MCF 10A (cell line): ENCODE measurements at regions of chr5 and their contacts with region 1.

Region 1: GRCh38 chr5:134063188-134063820 is 51.2 kb upstream of the TCF7 start:
- DNase-seq: peak; percentile 18
- H3K4me3 Mint-ChIP-seq: no peak overlapping the region
- H3K27ac Mint-ChIP-seq: no peak overlapping the region
- H3K4me1 Mint-ChIP-seq: peaks cover 13% of the 10 kb centered on the region
- H3K27me3 Mint-ChIP-seq: no peaks in the 10 kb centered on the region
- CTCF ChIP-seq: no peak

Region 2: DNA sequence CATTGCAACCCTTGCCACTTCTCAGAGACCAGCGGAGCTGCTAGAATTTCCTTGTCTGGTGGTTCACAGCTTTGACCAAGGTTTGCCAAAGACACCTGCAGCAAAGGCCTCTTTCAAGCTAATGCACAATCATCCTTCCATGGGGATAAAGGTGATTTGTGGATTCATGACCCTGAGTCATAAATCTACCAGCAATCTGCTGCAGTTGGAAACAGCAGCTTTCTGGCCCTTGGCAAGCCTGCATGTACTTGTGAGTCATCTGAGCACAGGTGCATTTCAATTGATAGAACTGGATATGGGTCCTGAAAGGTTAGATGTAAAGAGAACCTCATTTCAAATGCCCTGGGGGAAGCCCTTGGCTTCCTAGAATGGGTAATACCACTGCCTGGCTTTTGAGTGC is 29.6 kb after region 1 on chr5:
- CTCF ChIA-PET with region 1: interaction called, 4 read pairs
- POLR2A ChIA-PET with region 1: interaction called, 3 read pairs
- intact Hi-C with region 1: loop called (anchors 5 kb)
- DNase-seq: peak; percentile 93
- H3K4me3 Mint-ChIP-seq: no peak overlapping the region
- H3K27ac Mint-ChIP-seq: no peak overlapping the region
- H3K4me1 Mint-ChIP-seq: peaks cover 15% of the 10 kb centered on the region
- H3K27me3 Mint-ChIP-seq: no peaks in the 10 kb centered on the region
- CTCF ChIP-seq: no peak